IMR-90 (cell line): ENCODE measurements at regions of chr9 and their contacts with region 1.

Region 1: GRCh38 chr9:69672596-69673310 is 582 bp upstream of the APBA1 start:
- DNase-seq: peak; percentile 89
- ATAC-seq: peak; percentile 80
- H3K4me3 ChIP-seq: peak overlapping the region; percentile 69
- H3K27ac ChIP-seq: peak overlapping the region; percentile 73
- H3K4me1 ChIP-seq: peaks cover 6% of the 10 kb centered on the region
- H3K27me3 ChIP-seq: no peaks in the 10 kb centered on the region
- CTCF ChIP-seq: peak; percentile 90
- POLR2A ChIP-seq: no peak
- RAD21 ChIP-seq: peak; percentile 80

Region 2: DNA sequence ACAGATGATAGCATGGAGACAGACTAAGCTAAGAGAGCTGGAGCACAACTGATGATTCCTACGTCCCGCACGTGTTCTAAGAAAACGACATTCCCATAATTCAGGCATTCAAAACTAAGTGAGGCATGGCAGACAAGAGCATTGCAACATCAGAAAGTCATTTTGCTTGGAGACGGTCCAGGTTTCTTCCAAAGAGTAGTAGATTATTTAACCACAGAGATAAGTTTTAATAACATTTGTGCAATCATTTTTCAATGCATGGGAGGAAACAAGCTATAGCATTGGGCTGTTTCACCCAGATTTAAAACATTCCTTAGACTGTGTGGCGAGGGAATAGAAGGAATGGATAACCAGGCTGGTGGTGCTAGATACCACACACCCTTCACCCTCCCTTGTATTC is 117.8 kb before region 1 on chr9:
- CTCF ChIA-PET with region 1: interaction called, 4 read pairs
- POLR2A ChIA-PET with region 1: no interaction called
- dilution Hi-C with region 1: no loop called
- in situ Hi-C with region 1: no loop called
- intact Hi-C with region 1: loop called (anchors 5 kb)
- DNase-seq: peak; percentile 93
- ATAC-seq: peak; percentile 88
- H3K4me3 ChIP-seq: no peak overlapping the region
- H3K27ac ChIP-seq: no peak overlapping the region
- H3K4me1 ChIP-seq: no peaks in the 10 kb centered on the region
- H3K27me3 ChIP-seq: 0 out of 2 replicates have a peak, but pooled peaks cover 2% of the 10 kb centered on the region
- CTCF ChIP-seq: no peak
- POLR2A ChIP-seq: no peak
- RAD21 ChIP-seq: no peak

Region 3: DNA sequence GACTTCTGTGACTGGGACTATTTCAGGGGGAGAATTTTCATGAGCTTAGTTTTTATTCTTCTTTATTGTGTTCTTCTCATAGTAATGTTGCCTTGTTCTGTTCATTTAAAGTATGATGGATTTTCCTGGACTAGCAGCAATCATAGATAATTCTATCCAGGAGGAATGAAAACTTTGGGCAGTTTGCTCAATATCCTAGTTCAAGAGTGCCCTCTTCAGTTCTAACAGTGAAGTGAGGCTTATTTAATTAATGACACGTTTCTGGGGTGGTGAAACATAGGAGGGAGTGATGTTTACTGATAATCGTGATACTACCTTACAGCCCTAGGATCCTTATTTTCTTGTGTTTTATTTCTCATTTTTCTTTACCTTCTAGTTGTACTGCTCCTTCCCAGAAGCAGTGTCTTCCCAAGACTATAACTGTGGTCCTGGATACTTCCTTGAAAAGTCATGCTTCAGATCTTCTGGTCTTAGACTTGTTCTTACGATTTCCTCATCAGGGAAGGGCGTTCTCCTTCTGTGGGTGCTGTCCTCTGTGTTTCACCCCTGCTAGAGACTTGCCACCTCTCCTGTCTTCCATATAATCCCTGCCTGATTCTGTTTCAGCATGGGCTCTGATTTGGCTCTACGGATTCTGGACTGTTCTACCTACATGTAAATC is 205.2 kb after region 1 on chr9:
- CTCF ChIA-PET with region 1: interaction called, 3 read pairs
- POLR2A ChIA-PET with region 1: no interaction called
- dilution Hi-C with region 1: no loop called
- in situ Hi-C with region 1: loop called (anchors 10 kb)
- intact Hi-C with region 1: loop called (anchors 2 kb)
- DNase-seq: peak; percentile 52
- ATAC-seq: peak; percentile 89
- H3K4me3 ChIP-seq: no peak overlapping the region
- H3K27ac ChIP-seq: no peak overlapping the region
- H3K4me1 ChIP-seq: peaks cover 2% of the 10 kb centered on the region; the same call in 1 of the 2 replicates
- H3K27me3 ChIP-seq: no peaks in the 10 kb centered on the region
- CTCF ChIP-seq: peak; percentile 79
- POLR2A ChIP-seq: no peak
- RAD21 ChIP-seq: peak; percentile 88

Region 4: DNA sequence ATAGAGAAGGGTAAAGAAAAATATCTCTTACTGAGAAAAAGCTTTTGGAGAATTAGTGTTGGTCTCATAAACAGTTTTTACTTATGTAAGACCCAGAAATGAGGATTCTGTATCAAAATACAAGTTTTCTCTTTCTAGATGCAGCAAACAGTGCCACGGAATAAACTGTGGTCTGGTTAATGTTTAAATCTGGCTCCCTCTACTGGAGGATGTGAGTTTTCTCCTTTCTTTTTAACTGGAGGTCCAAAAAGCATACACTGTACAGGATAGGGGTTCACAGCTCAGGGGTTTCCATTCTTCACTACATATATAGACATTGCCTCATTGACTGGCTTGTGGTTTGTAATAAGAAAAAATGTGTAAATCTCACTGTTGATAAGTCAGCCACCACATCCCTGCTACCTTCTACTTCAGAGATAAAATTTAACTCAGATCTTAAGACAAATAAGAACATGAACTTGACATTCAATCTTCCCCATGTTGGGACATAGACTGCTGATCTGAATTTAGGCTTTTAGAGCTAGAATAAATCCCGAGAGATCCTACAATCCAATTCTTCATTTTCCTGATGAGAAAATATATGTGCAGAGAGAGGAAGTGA is 246.8 kb after region 1 on chr9:
- CTCF ChIA-PET with region 1: interaction called, 3 read pairs
- POLR2A ChIA-PET with region 1: no interaction called
- dilution Hi-C with region 1: no loop called
- in situ Hi-C with region 1: no loop called
- intact Hi-C with region 1: loop called (anchors 1 kb)
- DNase-seq: peak; percentile 74
- ATAC-seq: peak; percentile 93
- H3K4me3 ChIP-seq: no peak overlapping the region
- H3K27ac ChIP-seq: no peak overlapping the region
- H3K4me1 ChIP-seq: peaks cover 2% of the 10 kb centered on the region; the same call in 1 of the 2 replicates
- H3K27me3 ChIP-seq: no peaks in the 10 kb centered on the region
- CTCF ChIP-seq: peak; percentile 82
- POLR2A ChIP-seq: no peak
- RAD21 ChIP-seq: peak; percentile 81

Region 5: GRCh38 chr9:70229579-70229978 is 556.8 kb after region 1 on chr9:
- CTCF ChIA-PET with region 1: no interaction called
- POLR2A ChIA-PET with region 1: no interaction called
- dilution Hi-C with region 1: no loop called
- in situ Hi-C with region 1: loop called (anchors 25 kb)
- intact Hi-C with region 1: loop called (anchors 10 kb)
- DNase-seq: peak; percentile 68
- ATAC-seq: peak; percentile 88
- H3K4me3 ChIP-seq: no peak overlapping the region
- H3K27ac ChIP-seq: no peak overlapping the region
- H3K4me1 ChIP-seq: peaks cover 7% of the 10 kb centered on the region
- H3K27me3 ChIP-seq: no peaks in the 10 kb centered on the region
- CTCF ChIP-seq: peak; percentile 65
- POLR2A ChIP-seq: no peak
- RAD21 ChIP-seq: peak; percentile 80